HEK293T (cell line): ENCODE measurements at regions of chr5 and their contacts with region 1.

Region 1: GRCh38 chr5:140346348-140347101 is at the start of gene HBEGF:
- DNase-seq: peak; percentile 92

Region 2: GRCh38 chr5:140244525-140245025 is 102.0 kb before region 1 on chr5:
- CTCF ChIA-PET with region 1: interaction called, 174 read pairs
- POLR2A ChIA-PET with region 1: interaction called, 117 read pairs
- DNase-seq: peak; percentile 84

Region 3: GRCh38 chr5:140302786-140303639 is 43.5 kb before region 1 on chr5 and contains the start of gene PFDN1:
- CTCF ChIA-PET with region 1: interaction called, 6 read pairs
- POLR2A ChIA-PET with region 1: interaction called, 43 read pairs
- DNase-seq: peak; percentile 97

Region 4: DNA sequence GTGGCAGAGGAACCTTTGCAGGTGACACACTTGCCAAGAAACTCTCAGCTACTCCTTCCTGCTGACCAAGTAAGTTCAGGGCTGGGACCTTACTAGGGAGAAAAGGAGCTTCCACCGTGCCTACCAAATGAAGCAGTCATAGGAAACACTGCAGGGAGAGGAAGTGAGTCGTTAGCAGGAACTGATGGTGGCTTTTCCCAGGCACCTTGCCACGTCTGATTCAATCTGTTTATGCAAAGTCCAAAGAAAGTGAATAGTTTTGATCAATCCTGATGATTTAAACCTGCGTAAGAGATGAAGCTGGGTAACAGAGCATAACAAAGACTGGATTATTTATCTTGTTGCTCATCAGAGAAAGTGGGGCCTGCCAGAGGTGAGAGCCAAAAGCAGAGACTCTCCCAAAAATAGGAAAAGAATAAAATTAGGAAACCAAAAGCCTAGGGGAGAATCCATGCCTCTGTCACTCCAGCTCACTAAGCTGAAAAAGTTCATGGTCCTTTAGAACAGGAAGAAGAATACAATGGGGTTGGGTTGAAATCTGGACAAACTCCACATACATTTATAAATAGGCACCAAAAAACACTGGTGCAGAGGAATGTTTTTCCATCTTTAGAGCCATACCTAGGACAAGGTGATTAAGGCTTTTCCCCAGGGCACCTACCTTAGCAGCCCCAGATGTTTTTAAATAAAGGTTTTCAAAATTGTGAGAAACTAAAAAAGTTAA is 34.3 kb before region 1 on chr5:
- CTCF ChIA-PET with region 1: interaction called, 6 read pairs
- POLR2A ChIA-PET with region 1: interaction called, 18 read pairs
- DNase-seq: no peak

Region 5: DNA sequence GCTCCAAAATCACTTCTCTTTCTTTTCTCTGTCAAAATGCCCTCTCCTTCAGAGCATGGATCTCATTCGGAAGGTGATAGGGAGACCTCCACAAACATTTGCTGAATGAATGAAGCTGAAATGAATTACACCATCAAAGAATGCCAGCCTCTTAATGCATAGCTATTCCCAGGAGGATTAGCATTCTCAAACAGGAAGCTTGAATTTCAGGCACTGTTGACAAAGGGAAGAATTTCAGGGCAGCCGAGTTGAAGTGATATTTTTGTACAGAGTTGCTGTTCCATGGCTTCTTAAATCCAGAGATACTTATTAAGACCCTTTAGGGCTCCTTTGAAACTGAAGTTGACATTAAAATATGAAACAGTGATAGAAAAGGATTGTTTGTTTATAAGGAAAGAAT is 18.9 kb before region 1 on chr5:
- CTCF ChIA-PET with region 1: interaction called, 26 read pairs
- POLR2A ChIA-PET with region 1: interaction called, 17 read pairs
- DNase-seq: peak; percentile 35

Region 6: GRCh38 chr5:140336388-140336787 is 10.1 kb before region 1 on chr5:
- CTCF ChIA-PET with region 1: interaction called, 16 read pairs
- POLR2A ChIA-PET with region 1: interaction called, 25 read pairs
- DNase-seq: no peak

Region 7: DNA sequence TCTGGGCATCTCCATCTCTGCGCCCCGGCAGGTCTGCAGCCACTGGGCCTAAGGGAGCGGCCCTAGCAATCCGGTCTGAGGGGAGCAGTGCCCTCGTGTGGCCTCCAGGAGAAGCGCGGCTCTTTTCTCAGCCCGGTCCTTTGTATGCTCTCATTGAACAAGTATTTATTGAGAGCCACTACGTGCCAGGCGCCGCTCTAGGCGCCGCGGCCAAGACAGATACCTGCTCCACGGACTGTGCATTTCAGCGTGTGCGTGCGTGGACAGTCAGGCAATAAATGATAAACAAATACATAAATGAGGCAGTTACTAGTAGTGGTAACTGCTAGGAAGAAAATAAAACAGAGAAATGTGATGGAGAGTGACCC is 11.2 kb after region 1 on chr5:
- CTCF ChIA-PET with region 1: interaction called, 20 read pairs
- POLR2A ChIA-PET with region 1: interaction called, 6 read pairs
- DNase-seq: peak; percentile 86